Gastrocnemius medialis (tissue), 4 donors: ENCODE measurements at regions of chr1 and their contacts with region 1.

Region 1: DNA sequence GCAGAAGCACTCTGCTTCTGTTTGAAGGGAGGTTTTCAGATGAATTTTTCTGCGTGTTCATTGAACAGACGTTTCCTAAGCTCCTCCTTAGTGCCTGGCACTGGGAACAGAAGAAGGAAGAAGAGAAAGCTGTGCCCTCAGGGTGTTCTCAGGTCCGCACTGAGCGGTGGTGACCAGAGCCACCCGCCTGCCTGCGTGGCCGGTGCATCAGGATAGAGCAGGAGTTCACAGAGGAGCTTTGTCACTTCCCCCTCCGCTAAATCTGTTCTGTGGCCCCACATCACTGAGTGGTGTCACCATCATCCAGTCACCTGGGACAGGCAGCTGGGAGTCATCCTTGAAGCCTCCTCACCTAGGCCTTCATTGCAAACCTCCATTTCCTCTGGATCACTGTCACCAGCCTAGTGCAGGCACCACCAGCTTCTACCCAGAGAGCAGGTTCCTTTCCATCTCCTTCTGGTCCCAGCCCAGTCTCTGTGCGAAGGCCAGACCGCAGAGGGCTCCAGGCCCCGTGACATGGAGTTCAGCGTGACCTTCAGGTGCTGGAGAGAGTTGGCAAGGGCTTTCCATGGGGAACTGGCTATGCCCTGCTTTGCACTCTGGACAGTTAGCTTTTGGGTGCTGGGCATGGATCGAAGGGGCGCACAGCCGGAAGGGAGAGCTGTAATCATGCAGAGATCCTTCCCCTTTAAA is 21.7 kb downstream of the PARK7 start:
- DNase-seq: no peak
- ATAC-seq: peak; percentile 21 to 22
- H3K4me3 ChIP-seq: no peak overlapping the region
- H3K27ac ChIP-seq: peak overlapping the region; percentile 36 to 61 (median 56)
- H3K4me1 ChIP-seq: peaks cover 21% of the 10 kb centered on the region in 2 donors
- H3K27me3 ChIP-seq: no peaks in the 10 kb centered on the region
- CTCF ChIP-seq: no peak
- POLR2A ChIP-seq: no peak

Region 2: GRCh38 chr1:8015036-8015808 is 32.0 kb after region 1 on chr1:
- in situ Hi-C with region 1: loop called in 1 of 4 experiments (anchors 5 kb)
- intact Hi-C with region 1: loop called (anchors 2 kb)
- DNase-seq: no peak
- ATAC-seq: peak; percentile 15 to 22
- H3K4me3 ChIP-seq: peak overlapping the region in 3 of 4 donors; percentile 5 to 23 (median 12)
- H3K27ac ChIP-seq: peak overlapping the region; percentile 64 to 94 (median 88)
- H3K4me1 ChIP-seq: peaks cover 88 to 96% of the 10 kb centered on the region in 2 donors
- H3K27me3 ChIP-seq: no peaks in the 10 kb centered on the region
- CTCF ChIP-seq: peak; percentile 55 to 64 (median 60)
- POLR2A ChIP-seq: no peak

Region 3: GRCh38 chr1:8314346-8315280 is 331.4 kb after region 1 on chr1:
- in situ Hi-C with region 1: loop called (anchors 5 to 10 kb)
- intact Hi-C with region 1: loop called (anchors 1 kb)
- DNase-seq: peak; percentile 49 to 71
- ATAC-seq: peak; percentile 85 to 90
- H3K4me3 ChIP-seq: no peak overlapping the region
- H3K27ac ChIP-seq: no peak overlapping the region
- H3K4me1 ChIP-seq: peaks cover 9 to 29% of the 10 kb centered on the region in 2 donors
- H3K27me3 ChIP-seq: peaks cover 0 to 6% (median 3%) of the 10 kb centered on the region in 3 donors
- CTCF ChIP-seq: peak; percentile 90 to 95 (median 91)
- POLR2A ChIP-seq: no peak

Region 4: DNA sequence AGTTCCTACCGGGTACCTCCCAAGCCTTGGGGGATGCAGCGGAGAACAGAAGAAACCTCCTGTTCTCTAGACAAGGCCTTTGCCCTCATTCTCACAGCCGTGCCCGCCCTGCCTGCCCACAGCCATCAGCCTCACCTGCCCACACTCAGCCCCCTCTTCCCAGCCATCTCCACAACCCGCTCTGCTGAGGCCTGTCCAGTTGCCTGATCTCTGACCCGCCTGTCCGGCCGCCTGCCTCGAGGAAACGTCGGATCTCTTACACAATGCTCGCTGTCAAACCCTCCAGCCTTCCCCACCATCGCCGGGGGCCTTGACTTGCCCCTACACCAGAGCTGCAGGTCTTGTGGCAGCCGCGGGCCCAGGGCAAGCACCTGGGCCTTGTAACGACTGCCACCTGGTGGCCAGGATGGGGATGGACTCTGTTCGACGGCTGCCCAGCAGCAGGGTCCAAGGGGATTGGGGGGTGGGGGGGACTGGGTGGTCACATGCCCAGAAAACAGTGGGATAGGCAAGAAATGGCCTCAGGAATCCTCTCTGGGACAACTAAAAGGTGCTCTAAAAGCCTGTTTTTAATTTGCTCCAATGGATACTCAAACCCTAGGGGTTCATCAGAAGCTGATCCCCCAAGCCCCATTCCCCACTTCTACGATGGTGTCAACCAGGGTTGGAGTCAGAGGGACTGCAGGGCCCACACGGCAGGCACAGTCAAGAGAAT is 365.7 kb after region 1 on chr1:
- in situ Hi-C with region 1: loop called (anchors 10 kb)
- intact Hi-C with region 1: loop called (anchors 2 kb)
- DNase-seq: peak in 1 of 2 donors; percentile 61
- ATAC-seq: peak; percentile 31 to 34
- H3K4me3 ChIP-seq: no peak overlapping the region
- H3K27ac ChIP-seq: peak overlapping the region in 1 of 4 donors; percentile 35
- H3K4me1 ChIP-seq: peaks cover 22 to 33% of the 10 kb centered on the region in 2 donors
- H3K27me3 ChIP-seq: no peaks in the 10 kb centered on the region
- CTCF ChIP-seq: peak; percentile 70 to 94 (median 93)
- POLR2A ChIP-seq: no peak